Activated T-helper 2 cell treated with anti-CD3 and anti-CD28 coated beads, Interferon-gamma antibody, Interleukin-2, Interleukin-4, amounts not matched to agents 10 μg/mL and 5 μg/mL and 100 μg/mL, durations not matched to agents 14 hours and 24 hours and 36 hours (primary cell): ENCODE measurements at regions of chr17 and their contacts with region 1.

Region 1: GRCh38 chr17:78774956-78775571 is 7.0 kb downstream of the CYTH1 start:
- DNase-seq: peak; percentile 67
- H3K4me3 Mint-ChIP-seq: peak overlapping the region; percentile 85
- H3K27ac Mint-ChIP-seq: peak overlapping the region; percentile 98
- H3K4me1 Mint-ChIP-seq: peaks cover 58% of the 10 kb centered on the region
- H3K27me3 Mint-ChIP-seq: no peaks in the 10 kb centered on the region

Region 2: GRCh38 chr17:78391843-78392242 is 383.2 kb before region 1 on chr17:
- intact Hi-C with region 1: no loop called
- DNase-seq: no peak
- H3K4me3 Mint-ChIP-seq: no peak overlapping the region
- H3K27ac Mint-ChIP-seq: no peak overlapping the region
- H3K4me1 Mint-ChIP-seq: peaks cover 31% of the 10 kb centered on the region
- H3K27me3 Mint-ChIP-seq: no peaks in the 10 kb centered on the region

Region 3: GRCh38 chr17:78697554-78698343 is 77.3 kb before region 1 on chr17:
- intact Hi-C with region 1: no loop called
- DNase-seq: no peak
- H3K4me3 Mint-ChIP-seq: no peak overlapping the region
- H3K27ac Mint-ChIP-seq: peak overlapping the region; percentile 39
- H3K4me1 Mint-ChIP-seq: no peaks in the 10 kb centered on the region
- H3K27me3 Mint-ChIP-seq: no peaks in the 10 kb centered on the region

Region 4: GRCh38 chr17:78759203-78759968 is 15.7 kb before region 1 on chr17:
- intact Hi-C with region 1: loop called (anchors 1 kb)
- DNase-seq: peak; percentile 69
- H3K4me3 Mint-ChIP-seq: peak overlapping the region; percentile 51
- H3K27ac Mint-ChIP-seq: peak overlapping the region; percentile 98
- H3K4me1 Mint-ChIP-seq: peaks cover 54% of the 10 kb centered on the region
- H3K27me3 Mint-ChIP-seq: no peaks in the 10 kb centered on the region

Region 5: DNA sequence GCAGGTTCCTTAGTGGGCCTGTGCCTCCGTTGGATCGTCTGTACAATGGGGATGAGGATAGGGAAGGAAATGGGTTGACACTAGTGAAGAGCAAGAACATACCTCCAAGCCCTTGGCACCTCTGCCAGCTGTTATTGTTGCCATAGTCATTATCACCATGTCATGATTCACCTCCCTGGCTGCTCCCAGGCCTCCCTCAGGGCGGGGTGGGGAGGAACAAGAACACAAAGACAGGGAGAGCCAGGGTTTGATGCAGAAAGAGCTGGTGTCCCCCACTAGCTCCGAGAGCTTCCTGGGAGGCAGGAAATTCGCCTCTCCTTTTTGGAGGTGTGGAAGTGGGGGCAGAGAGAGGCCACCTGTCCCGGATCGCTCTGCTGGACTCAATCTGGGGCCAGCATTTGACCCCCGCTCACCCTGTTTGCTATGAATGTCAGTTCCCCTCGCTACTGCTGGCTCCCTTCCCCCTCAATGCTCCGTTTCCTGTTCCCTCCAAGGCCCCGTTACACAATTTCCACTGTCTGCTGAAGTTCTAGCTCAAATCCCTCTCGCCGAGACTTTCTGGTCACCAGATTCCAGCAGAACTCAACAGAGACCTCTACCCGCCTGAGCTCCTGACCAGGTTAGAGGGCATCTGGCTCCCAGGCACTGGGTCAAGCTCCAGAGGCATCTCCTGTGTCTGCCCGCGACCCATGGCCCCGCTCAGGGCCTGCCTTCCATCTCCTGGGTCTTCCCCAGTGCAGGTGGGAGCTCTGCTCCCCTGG is 141.0 kb after region 1 on chr17:
- intact Hi-C with region 1: no loop called
- DNase-seq: no peak
- H3K4me3 Mint-ChIP-seq: no peak overlapping the region
- H3K27ac Mint-ChIP-seq: no peak overlapping the region
- H3K4me1 Mint-ChIP-seq: no peaks in the 10 kb centered on the region
- H3K27me3 Mint-ChIP-seq: peaks cover 4% of the 10 kb centered on the region